Dorsolateral prefrontal cortex (tissue), 120 donors: ENCODE measurements at regions of chr11 and their contacts with region 1.

Region 1: GRCh38 chr11:10450464-10451425 is 4.3 kb upstream of the AMPD3 start:
- DNase-seq: peak in 5 of 10 donors; percentile 25 to 68 (median 49)
- H3K4me3 ChIP-seq: peak overlapping the region; percentile 47 to 88 (median 70)
- H3K27ac ChIP-seq: peak overlapping the region; percentile 77 to 100 (median 95)
- H3K27me3 ChIP-seq: no peaks in the 10 kb centered on the region
- CTCF ChIP-seq: peak in 36 of 56 donors; percentile 4 to 56 (median 29)

Region 2: GRCh38 chr11:10490398-10491241 is 39.9 kb after region 1 on chr11:
- intact Hi-C with region 1: loop called in 1 of 2 experiments (anchors 2 kb)
- DNase-seq: peak; percentile 23 to 96 (median 89)
- H3K4me3 ChIP-seq: peak overlapping the region in 3 of 59 donors; percentile 1 to 37 (median 30)
- H3K27ac ChIP-seq: peak overlapping the region; percentile 73 to 99 (median 94)
- H3K27me3 ChIP-seq: no peaks in the 10 kb centered on the region
- CTCF ChIP-seq: peak in 4 of 56 donors; percentile 6 to 23 (median 10)

Region 3: GRCh38 chr11:10526974-10527918 is 76.5 kb after region 1 on chr11:
- intact Hi-C with region 1: loop called in 1 of 2 experiments (anchors 5 kb)
- DNase-seq: peak in 1 of 10 donors; percentile 46
- H3K4me3 ChIP-seq: peak overlapping the region in 8 of 59 donors; percentile 3 to 13 (median 8)
- H3K27ac ChIP-seq: peak overlapping the region in 57 of 59 donors; percentile 63 to 98 (median 89)
- H3K27me3 ChIP-seq: no peaks in the 10 kb centered on the region
- CTCF ChIP-seq: no peak